ENCODE measurements at regions of chr9 and their contacts with region 1.

Region 1: DNA sequence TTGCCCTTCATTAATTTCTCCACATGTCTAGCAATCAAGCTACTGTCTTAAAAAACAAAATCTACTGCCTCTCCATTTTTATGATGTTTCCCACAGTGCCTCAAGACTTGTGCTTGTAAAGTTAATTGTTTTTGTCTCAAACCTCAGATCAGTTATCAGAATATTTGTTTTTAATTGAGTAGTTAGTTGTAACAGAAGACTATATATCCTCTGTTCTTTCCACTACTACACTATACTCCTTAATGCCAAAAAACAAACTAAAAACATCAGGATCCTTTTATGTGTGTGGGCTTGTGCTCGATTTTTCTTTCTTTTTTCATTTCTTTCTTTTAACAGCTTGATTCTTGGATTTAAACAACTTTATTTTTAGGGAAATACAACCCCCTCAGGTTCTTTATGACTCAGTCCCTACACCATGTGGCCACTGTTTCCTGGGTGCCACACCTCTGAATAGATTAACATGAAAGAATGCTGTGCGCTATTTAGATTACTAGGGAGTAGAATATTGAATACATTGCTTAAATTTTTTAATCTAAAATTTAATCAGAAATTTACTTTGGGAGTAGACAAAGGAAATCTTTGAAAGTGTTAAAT is 1.2 kb downstream of the ASPN start:
- DNase-seq: no peak
- ATAC-seq: peak in 2 of 4 donors; percentile 42 to 67
- H3K4me3 ChIP-seq: peak overlapping the region in 11 of 12 donors; percentile 5 to 60 (median 33)
- H3K27ac ChIP-seq: peak overlapping the region; percentile 31 to 85 (median 72)
- H3K4me1 ChIP-seq: peaks cover 0 to 53% (median 23%) of the 10 kb centered on the region in 12 donors
- H3K27me3 ChIP-seq: no peaks in the 10 kb centered on the region
- CTCF ChIP-seq: no peak
- POLR2A ChIP-seq: no peak

Region 2: DNA sequence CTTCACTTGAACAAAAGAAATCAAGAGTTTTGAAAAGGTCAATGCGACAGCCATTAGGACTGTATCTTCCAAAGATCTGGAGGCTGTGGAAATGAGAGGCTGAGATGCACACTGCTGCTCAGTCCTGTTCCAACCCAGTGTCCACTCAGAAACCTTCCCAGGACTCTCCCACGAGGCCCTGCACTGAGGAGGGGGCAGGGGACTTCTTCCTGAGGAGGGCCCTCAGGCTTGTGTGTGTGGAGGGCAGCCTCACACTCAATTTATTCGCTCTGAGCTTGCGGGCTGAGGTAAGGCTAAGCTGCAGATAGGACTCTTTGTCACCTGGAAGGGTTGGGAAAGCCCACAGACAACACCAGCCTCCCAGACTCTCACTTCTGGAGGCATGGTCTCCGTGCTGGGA is 461.5 kb before region 1 on chr9:
- intact Hi-C with region 1: no loop called
- DNase-seq: no peak
- ATAC-seq: no peak
- H3K4me3 ChIP-seq: no peak overlapping the region
- H3K27ac ChIP-seq: no peak overlapping the region
- H3K4me1 ChIP-seq: no peaks in the 10 kb centered on the region
- H3K27me3 ChIP-seq: no peaks in the 10 kb centered on the region
- CTCF ChIP-seq: no peak
- POLR2A ChIP-seq: no peak

Region 3: GRCh38 chr9:92535940-92536850 is 55.1 kb after region 1 on chr9 and contains the start of gene ECM2:
- intact Hi-C with region 1: loop called in 2 of 10 experiments (anchors 5 to 10 kb)
- DNase-seq: peak in 1 of 5 donors; percentile 26
- ATAC-seq: peak in 2 of 4 donors; percentile 65 to 70
- H3K4me3 ChIP-seq: peak within 1 kb of the TSS in 10 of 12 donors; percentile 18 to 56 (median 34)
- H3K27ac ChIP-seq: peak within 1 kb of the TSS; percentile 36 to 92 (median 66)
- H3K4me1 ChIP-seq: peaks cover 0 to 44% (median 0%) of the 10 kb centered on the region in 12 donors
- H3K27me3 ChIP-seq: no peaks in the 10 kb centered on the region
- CTCF ChIP-seq: no peak
- POLR2A ChIP-seq: no peak
- total RNA-seq, gene ECM2: 3.1 to 32.4 (median 10.1) TPM

Region 4: DNA sequence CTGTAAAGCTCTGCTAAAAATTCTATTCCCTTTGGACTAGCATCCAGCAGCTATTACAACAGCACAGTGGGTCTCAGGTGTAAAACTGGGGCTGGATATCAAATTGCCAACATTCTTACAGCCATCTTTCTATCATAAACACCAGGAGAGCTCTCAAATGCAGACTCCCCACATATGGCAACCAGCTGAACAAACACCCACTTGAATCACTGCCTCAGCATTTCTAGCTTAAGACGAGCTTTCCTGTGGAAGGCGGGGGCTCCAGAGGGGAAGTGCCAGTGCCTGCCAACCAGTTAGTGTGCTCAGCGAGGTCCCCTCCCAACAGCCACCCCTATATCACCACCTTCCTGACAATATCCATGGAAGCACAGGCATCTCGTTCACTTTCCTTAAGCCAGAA is 126.6 kb after region 1 on chr9:
- intact Hi-C with region 1: loop called in 4 of 10 experiments (anchors 5 to 10 kb)
- DNase-seq: peak in 1 of 5 donors; percentile 52
- ATAC-seq: peak in 3 of 4 donors; percentile 3 to 23 (median 6)
- H3K4me3 ChIP-seq: no peak overlapping the region
- H3K27ac ChIP-seq: peak overlapping the region in 11 of 12 donors; percentile 23 to 94 (median 83)
- H3K4me1 ChIP-seq: peaks cover 0 to 55% (median 30%) of the 10 kb centered on the region in 12 donors
- H3K27me3 ChIP-seq: no peaks in the 10 kb centered on the region
- CTCF ChIP-seq: no peak
- POLR2A ChIP-seq: no peak

Region 5: GRCh38 chr9:92616655-92617111 is 135.5 kb after region 1 on chr9:
- intact Hi-C with region 1: loop called in 1 of 10 experiments (anchors 10 kb)
- DNase-seq: peak in 1 of 5 donors; percentile 36
- ATAC-seq: peak; percentile 19 to 50 (median 42)
- H3K4me3 ChIP-seq: no peak overlapping the region
- H3K27ac ChIP-seq: peak overlapping the region; percentile 31 to 82 (median 63)
- H3K4me1 ChIP-seq: peaks cover 0 to 47% (median 5%) of the 10 kb centered on the region in 12 donors
- H3K27me3 ChIP-seq: no peaks in the 10 kb centered on the region
- CTCF ChIP-seq: no peak
- POLR2A ChIP-seq: no peak